B cell (primary cell): ENCODE measurements at regions of chr12 and their contacts with region 1.

Region 1: DNA sequence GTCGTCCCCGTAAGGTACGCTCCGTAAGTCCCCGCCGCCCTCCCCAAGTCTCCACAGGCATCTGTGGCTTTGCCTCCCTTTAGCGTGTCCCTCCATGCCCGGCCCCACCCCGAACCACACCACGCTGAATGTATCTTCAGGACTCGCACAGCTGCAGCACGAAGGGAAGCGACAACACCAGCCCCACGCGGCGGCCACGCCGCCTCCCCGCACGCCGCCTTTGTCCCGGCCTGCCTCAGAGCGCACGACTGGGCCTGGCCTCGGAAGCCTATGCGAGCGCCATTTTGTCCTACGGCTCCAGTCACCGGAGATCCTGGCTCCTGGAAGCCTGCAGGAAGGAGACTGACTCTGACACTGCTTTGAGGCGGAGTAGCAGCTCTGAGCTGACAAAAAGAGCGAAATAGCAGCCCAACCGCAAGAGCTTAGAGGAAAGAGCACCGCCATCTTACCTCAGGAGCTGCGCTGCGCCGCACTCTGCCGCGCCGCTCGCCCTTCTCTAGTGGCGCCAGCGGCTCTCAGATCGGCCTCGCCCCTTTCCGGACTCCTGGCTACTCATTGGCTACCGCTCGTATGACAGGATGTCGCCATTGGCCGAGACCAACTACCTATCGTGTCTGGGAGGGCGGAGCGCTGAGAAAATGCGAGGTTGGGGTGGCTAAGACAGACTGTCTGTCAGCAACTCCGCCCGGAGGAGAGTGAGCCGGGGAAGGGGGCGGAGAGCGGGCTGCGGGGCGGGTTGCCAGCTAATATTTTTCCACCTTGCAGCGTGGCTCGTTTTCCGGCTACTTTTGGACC is at the start of gene KANSL2:
- DNase-seq: peak; percentile 96
- ATAC-seq: peak; percentile 98
- H3K4me3 ChIP-seq: peak within 1 kb of the TSS; percentile 92 to 97 (median 96)
- H3K4me3 Mint-ChIP-seq: peak within 1 kb of the TSS; percentile 94
- H3K27ac ChIP-seq: peak within 1 kb of the TSS; percentile 93 to 95
- H3K27ac Mint-ChIP-seq: peak within 1 kb of the TSS; percentile 98
- H3K4me1 ChIP-seq: peaks cover 28 to 41% of the 10 kb centered on the region in 2 donors
- H3K4me1 Mint-ChIP-seq: peaks cover 44% of the 10 kb centered on the region
- H3K27me3 ChIP-seq: no peaks in the 10 kb centered on the region
- H3K27me3 Mint-ChIP-seq: no peaks in the 10 kb centered on the region
- CTCF ChIP-seq: no peak
- total RNA-seq, gene KANSL2: 64.6 and 67.4 TPM in 2 replicates

Region 2: GRCh38 chr12:48716493-48717251 is 34.7 kb after region 1 on chr12 and contains the start of gene CCNT1:
- CTCF ChIA-PET with region 1: interaction called, 4 read pairs
- POLR2A ChIA-PET with region 1: interaction called, 8 read pairs
- intact Hi-C with region 1: loop called (anchors 1 kb)
- DNase-seq: peak; percentile 100
- ATAC-seq: peak; percentile 91
- H3K4me3 ChIP-seq: peak within 1 kb of the TSS; percentile 82 to 98 (median 95)
- H3K4me3 Mint-ChIP-seq: peak within 1 kb of the TSS; percentile 88
- H3K27ac ChIP-seq: peak within 1 kb of the TSS; percentile 95 to 96
- H3K27ac Mint-ChIP-seq: peak within 1 kb of the TSS; percentile 97
- H3K4me1 ChIP-seq: peaks cover 19 to 27% of the 10 kb centered on the region in 2 donors
- H3K4me1 Mint-ChIP-seq: peaks cover 34% of the 10 kb centered on the region
- H3K27me3 ChIP-seq: no peaks in the 10 kb centered on the region
- H3K27me3 Mint-ChIP-seq: peaks cover 4% of the 10 kb centered on the region
- CTCF ChIP-seq: no peak
- total RNA-seq, gene CCNT1: 73.1 and 77.3 TPM in 2 replicates